Psoas muscle (tissue), 8 donors: ENCODE measurements at regions of chr2 and their contacts with region 1.

Region 1: DNA sequence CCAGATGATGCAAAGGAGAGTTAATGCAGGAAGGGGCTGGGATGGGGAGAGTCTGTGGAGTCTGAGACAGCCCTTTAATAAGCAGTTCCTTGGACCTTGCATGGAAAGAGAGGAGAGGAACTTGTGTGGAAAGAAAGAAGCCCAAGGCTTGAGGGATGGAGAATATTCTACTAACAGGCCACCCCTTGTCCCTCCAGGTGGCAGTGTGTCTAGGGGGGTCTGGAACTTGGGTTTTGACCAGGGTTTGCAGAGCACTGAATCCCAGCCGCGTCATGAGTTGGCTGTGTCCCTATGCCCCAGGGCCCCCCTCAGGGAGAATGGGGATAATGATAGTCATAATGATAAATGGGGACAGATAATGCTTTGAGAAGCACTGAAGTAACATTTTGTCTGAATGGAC is 15.0 kb downstream of the TCF7L1 start:
- DNase-seq: no peak
- ATAC-seq: no peak
- H3K4me3 ChIP-seq: no peak overlapping the region
- H3K27ac ChIP-seq: no peak overlapping the region
- H3K4me1 ChIP-seq: peaks cover 4% of the 10 kb centered on the region
- H3K27me3 ChIP-seq: no peaks in the 10 kb centered on the region
- CTCF ChIP-seq: no peak

Region 2: GRCh38 chr2:85273738-85274731 is 125.9 kb after region 1 on chr2:
- intact Hi-C with region 1: loop called in 1 of 2 experiments (anchors 5 kb)
- DNase-seq: peak; percentile 42 to 65
- ATAC-seq: peak; percentile 41 to 60 (median 47)
- H3K4me3 ChIP-seq: no peak overlapping the region
- H3K27ac ChIP-seq: no peak overlapping the region
- H3K4me1 ChIP-seq: peaks cover 14% of the 10 kb centered on the region
- H3K27me3 ChIP-seq: no peaks in the 10 kb centered on the region
- CTCF ChIP-seq: no peak